AG04449 (cell line): ENCODE measurements at regions of chr14 and their contacts with region 1.

Region 1: GRCh38 chr14:105281371-105282097 is 19.3 kb downstream of the BRF1 start:
- DNase-seq: peak; percentile 23
- H3K4me3 ChIP-seq: no peak overlapping the region
- CTCF ChIP-seq: peak; percentile 58

Region 2: DNA sequence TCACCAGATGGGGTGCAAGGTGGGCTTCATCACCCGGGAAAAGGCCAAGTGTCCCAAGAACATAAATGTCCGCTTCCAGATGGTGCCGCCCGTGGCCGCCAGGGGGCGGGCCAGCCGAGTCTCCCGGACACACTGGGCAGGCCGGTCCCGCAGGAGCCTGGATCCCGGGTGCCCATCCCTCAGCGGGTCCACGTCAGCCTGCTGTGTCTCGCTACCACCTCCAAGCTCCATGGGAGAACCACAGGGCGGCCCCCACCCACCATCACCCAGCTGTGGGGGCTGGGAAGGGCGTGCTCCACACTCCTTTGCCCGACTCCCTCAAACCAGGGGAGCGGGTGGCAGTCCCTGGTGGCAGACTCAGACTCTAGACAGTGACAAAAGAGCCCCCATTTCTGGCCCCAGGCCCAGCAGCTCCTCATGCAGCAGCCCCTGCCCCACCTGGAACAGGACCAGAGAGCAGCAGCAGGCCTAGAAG is 78.4 kb before region 1 on chr14:
- CTCF ChIA-PET with region 1: interaction called, 24 read pairs
- POLR2A ChIA-PET with region 1: no interaction called
- DNase-seq: no peak
- H3K4me3 ChIP-seq: 0 out of 2 replicates have a peak overlapping the region, but pooled peaks have one; percentile 3
- CTCF ChIP-seq: peak; percentile 96

Region 3: DNA sequence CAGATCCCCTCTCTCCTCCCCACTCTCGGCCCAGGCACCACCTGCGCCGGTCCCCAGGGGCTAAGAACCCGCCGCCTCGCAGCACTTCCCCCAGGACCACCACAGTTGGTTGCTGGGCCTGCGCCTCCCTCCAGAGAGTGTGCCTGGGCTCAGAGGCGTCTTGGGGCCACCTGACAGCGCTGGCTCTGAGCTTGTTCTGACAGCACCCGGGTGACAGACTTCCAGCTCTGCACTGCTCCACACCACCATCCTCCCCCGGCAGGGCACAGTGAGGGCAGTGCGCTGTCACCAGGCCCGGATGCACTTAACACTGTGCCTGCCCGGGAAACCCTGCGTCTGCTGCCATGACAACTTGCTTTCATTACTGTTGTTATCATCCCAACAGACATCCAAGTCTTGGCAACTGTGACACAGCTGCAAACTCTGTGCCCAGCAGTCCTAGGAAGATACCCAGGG is 12.6 kb after region 1 on chr14:
- CTCF ChIA-PET with region 1: interaction called, 20 read pairs
- POLR2A ChIA-PET with region 1: no interaction called
- DNase-seq: no peak
- H3K4me3 ChIP-seq: no peak overlapping the region
- CTCF ChIP-seq: no peak

Region 4: GRCh38 chr14:105300792-105301533 is 19.4 kb after region 1 on chr14 and contains the start of gene BRF1:
- CTCF ChIA-PET with region 1: interaction called, 12 read pairs
- POLR2A ChIA-PET with region 1: no interaction called
- DNase-seq: no peak
- H3K4me3 ChIP-seq: peak within 1 kb of the TSS; percentile 89
- CTCF ChIP-seq: no peak